CD8-positive, alpha-beta T cell (primary cell): ENCODE measurements at regions of chr10 and their contacts with region 1.

Region 1: GRCh38 chr10:50552771-50553535 is 70.8 kb downstream of the SGMS1 start:
- DNase-seq: peak in 7 of 9 experiments; percentile 7 to 80 (median 32)
- ATAC-seq: peak; percentile 94
- H3K4me3 ChIP-seq: no peak overlapping the region
- H3K4me3 Mint-ChIP-seq: no peak overlapping the region
- H3K27ac ChIP-seq: no peak overlapping the region
- H3K27ac Mint-ChIP-seq: no peak overlapping the region
- H3K4me1 ChIP-seq: no peaks in the 10 kb centered on the region
- H3K4me1 Mint-ChIP-seq: peaks cover 30% of the 10 kb centered on the region
- H3K27me3 ChIP-seq: no peaks in the 10 kb centered on the region
- H3K27me3 Mint-ChIP-seq: no peaks in the 10 kb centered on the region
- CTCF ChIP-seq: no peak

Region 2: GRCh38 chr10:50522908-50523307 is 30.0 kb before region 1 on chr10:
- CTCF ChIA-PET with region 1: no interaction called
- POLR2A ChIA-PET with region 1: no interaction called
- intact Hi-C with region 1: no loop called
- DNase-seq: peak in 2 of 9 experiments; percentile 23 to 27
- ATAC-seq: peak; percentile 56
- H3K4me3 ChIP-seq: no peak overlapping the region
- H3K4me3 Mint-ChIP-seq: peak overlapping the region; percentile 30
- H3K27ac ChIP-seq: no peak overlapping the region
- H3K27ac Mint-ChIP-seq: peak overlapping the region; percentile 79
- H3K4me1 ChIP-seq: peaks cover 13% of the 10 kb centered on the region
- H3K4me1 Mint-ChIP-seq: peaks cover 49% of the 10 kb centered on the region
- H3K27me3 ChIP-seq: no peaks in the 10 kb centered on the region
- H3K27me3 Mint-ChIP-seq: no peaks in the 10 kb centered on the region
- CTCF ChIP-seq: no peak

Region 3: GRCh38 chr10:50605269-50606263 is 52.6 kb after region 1 on chr10:
- CTCF ChIA-PET with region 1: no interaction called
- POLR2A ChIA-PET with region 1: no interaction called
- intact Hi-C with region 1: loop called in 1 of 2 experiments (anchors 10 kb)
- DNase-seq: peak in 2 of 9 experiments; percentile 31 to 47
- ATAC-seq: peak; percentile 11
- H3K4me3 ChIP-seq: no peak overlapping the region
- H3K4me3 Mint-ChIP-seq: peak overlapping the region; percentile 23
- H3K27ac ChIP-seq: peak overlapping the region in 1 of 2 experiments; percentile 9
- H3K27ac Mint-ChIP-seq: peak overlapping the region; percentile 62
- H3K4me1 ChIP-seq: peaks cover 31% of the 10 kb centered on the region
- H3K4me1 Mint-ChIP-seq: peaks cover 81% of the 10 kb centered on the region
- H3K27me3 ChIP-seq: no peaks in the 10 kb centered on the region
- H3K27me3 Mint-ChIP-seq: no peaks in the 10 kb centered on the region
- CTCF ChIP-seq: no peak

Region 4: GRCh38 chr10:50653142-50653541 is 100.2 kb after region 1 on chr10:
- CTCF ChIA-PET with region 1: interaction called, 24 read pairs
- POLR2A ChIA-PET with region 1: no interaction called
- intact Hi-C with region 1: loop called (anchors 1 kb)
- DNase-seq: peak in 3 of 9 experiments; percentile 31 to 63 (median 52)
- ATAC-seq: peak; percentile 78
- H3K4me3 ChIP-seq: no peak overlapping the region
- H3K4me3 Mint-ChIP-seq: no peak overlapping the region
- H3K27ac ChIP-seq: no peak overlapping the region
- H3K27ac Mint-ChIP-seq: no peak overlapping the region
- H3K4me1 ChIP-seq: peaks cover 10% of the 10 kb centered on the region
- H3K4me1 Mint-ChIP-seq: peaks cover 12% of the 10 kb centered on the region
- H3K27me3 ChIP-seq: no peaks in the 10 kb centered on the region
- H3K27me3 Mint-ChIP-seq: no peaks in the 10 kb centered on the region
- CTCF ChIP-seq: peak; percentile 58

Region 5: GRCh38 chr10:50896721-50897120 is 343.8 kb after region 1 on chr10:
- CTCF ChIA-PET with region 1: no interaction called
- POLR2A ChIA-PET with region 1: no interaction called
- intact Hi-C with region 1: loop called in 1 of 2 experiments (anchors 10 kb)
- DNase-seq: no peak
- ATAC-seq: no peak
- H3K4me3 ChIP-seq: no peak overlapping the region
- H3K4me3 Mint-ChIP-seq: no peak overlapping the region
- H3K27ac ChIP-seq: no peak overlapping the region
- H3K27ac Mint-ChIP-seq: no peak overlapping the region
- H3K4me1 ChIP-seq: no peaks in the 10 kb centered on the region
- H3K4me1 Mint-ChIP-seq: no peaks in the 10 kb centered on the region
- H3K27me3 ChIP-seq: peaks cover 0 to 2% of the 10 kb centered on the region in 2 experiments
- H3K27me3 Mint-ChIP-seq: peaks cover 10% of the 10 kb centered on the region
- CTCF ChIP-seq: no peak